IMR-90 (cell line): ENCODE measurements at regions of chr9 and their contacts with region 1.

Region 1: GRCh38 chr9:36407122-36407723 is 7.2 kb upstream of the RNF38 start:
- DNase-seq: peak; percentile 65
- ATAC-seq: peak; percentile 97
- H3K4me3 ChIP-seq: no peak overlapping the region
- H3K27ac ChIP-seq: no peak overlapping the region
- H3K4me1 ChIP-seq: no peaks in the 10 kb centered on the region; the same call in 1 of the 2 replicates
- H3K27me3 ChIP-seq: no peaks in the 10 kb centered on the region
- CTCF ChIP-seq: peak; percentile 94
- POLR2A ChIP-seq: no peak
- RAD21 ChIP-seq: peak; percentile 85

Region 2: DNA sequence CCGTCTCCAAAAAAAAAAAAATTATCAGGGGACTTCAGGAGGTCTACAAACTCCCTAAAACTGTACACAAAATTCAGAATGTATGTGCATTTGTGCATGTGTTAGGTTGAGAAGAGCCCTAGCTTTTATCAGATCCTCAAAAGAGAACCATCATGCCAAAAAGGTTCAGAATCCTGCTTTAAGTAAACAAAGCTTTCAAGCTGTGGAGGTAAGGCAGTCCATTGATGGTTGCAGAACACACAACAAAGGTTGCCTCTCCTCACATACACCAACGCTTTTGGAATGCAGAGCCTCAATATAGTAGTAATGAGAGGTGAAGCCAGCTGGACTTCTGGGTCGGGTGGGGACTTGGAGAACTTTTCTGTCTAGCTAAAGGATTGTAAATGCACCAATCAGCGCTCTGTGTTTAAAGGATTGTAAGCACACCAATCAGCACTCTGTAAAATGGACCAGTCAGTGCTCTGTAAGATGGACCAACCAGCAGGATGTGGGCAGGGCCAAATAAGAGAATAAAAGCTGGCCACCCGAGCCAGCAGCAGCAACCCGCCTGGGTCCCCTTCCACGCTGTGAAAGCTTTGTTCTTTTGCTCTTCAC is 50.7 kb after region 1 on chr9:
- CTCF ChIA-PET with region 1: interaction called, 19 read pairs
- POLR2A ChIA-PET with region 1: no interaction called
- dilution Hi-C with region 1: no loop called
- in situ Hi-C with region 1: no loop called
- intact Hi-C with region 1: no loop called
- DNase-seq: no peak
- ATAC-seq: no peak
- H3K4me3 ChIP-seq: no peak overlapping the region
- H3K27ac ChIP-seq: no peak overlapping the region
- H3K4me1 ChIP-seq: no peaks in the 10 kb centered on the region; the same call in 1 of the 2 replicates
- H3K27me3 ChIP-seq: no peaks in the 10 kb centered on the region
- CTCF ChIP-seq: no peak
- POLR2A ChIP-seq: no peak
- RAD21 ChIP-seq: no peak

Region 3: GRCh38 chr9:36521148-36521547 is 113.9 kb after region 1 on chr9:
- CTCF ChIA-PET with region 1: no interaction called
- POLR2A ChIA-PET with region 1: no interaction called
- dilution Hi-C with region 1: no loop called
- in situ Hi-C with region 1: no loop called
- intact Hi-C with region 1: no loop called
- DNase-seq: no peak
- ATAC-seq: no peak
- H3K4me3 ChIP-seq: no peak overlapping the region
- H3K27ac ChIP-seq: no peak overlapping the region
- H3K4me1 ChIP-seq: peaks cover 2% of the 10 kb centered on the region; the same call in 1 of the 2 replicates
- H3K27me3 ChIP-seq: peaks cover 2% of the 10 kb centered on the region; the same call in 1 of the 2 replicates
- CTCF ChIP-seq: no peak
- POLR2A ChIP-seq: no peak
- RAD21 ChIP-seq: no peak

Region 4: DNA sequence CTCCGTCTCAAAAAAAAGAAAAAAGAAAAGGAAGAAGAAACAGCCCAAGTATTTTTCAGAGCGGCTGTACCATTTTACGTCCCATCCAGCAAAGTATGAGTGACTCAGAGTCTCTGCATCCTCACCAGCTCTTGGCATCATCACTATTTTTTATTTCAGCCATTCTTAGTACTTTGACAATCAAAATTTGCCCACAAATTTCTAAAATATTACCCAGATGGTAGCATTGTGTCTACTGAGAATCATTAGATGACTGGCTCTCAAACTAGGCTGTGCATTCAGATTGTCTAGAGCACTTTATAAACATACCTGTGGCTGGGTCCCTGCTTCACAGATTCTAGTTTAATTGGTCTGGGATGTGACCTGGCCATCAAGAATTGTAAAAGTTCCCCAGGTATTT is 143.9 kb after region 1 on chr9:
- CTCF ChIA-PET with region 1: interaction called, 10 read pairs
- POLR2A ChIA-PET with region 1: no interaction called
- dilution Hi-C with region 1: no loop called
- in situ Hi-C with region 1: loop called (anchors 5 kb)
- intact Hi-C with region 1: loop called (anchors 1 kb)
- DNase-seq: no peak
- ATAC-seq: no peak
- H3K4me3 ChIP-seq: no peak overlapping the region
- H3K27ac ChIP-seq: no peak overlapping the region
- H3K4me1 ChIP-seq: no peaks in the 10 kb centered on the region
- H3K27me3 ChIP-seq: peaks cover 7% of the 10 kb centered on the region
- CTCF ChIP-seq: no peak
- POLR2A ChIP-seq: no peak
- RAD21 ChIP-seq: no peak

Region 5: DNA sequence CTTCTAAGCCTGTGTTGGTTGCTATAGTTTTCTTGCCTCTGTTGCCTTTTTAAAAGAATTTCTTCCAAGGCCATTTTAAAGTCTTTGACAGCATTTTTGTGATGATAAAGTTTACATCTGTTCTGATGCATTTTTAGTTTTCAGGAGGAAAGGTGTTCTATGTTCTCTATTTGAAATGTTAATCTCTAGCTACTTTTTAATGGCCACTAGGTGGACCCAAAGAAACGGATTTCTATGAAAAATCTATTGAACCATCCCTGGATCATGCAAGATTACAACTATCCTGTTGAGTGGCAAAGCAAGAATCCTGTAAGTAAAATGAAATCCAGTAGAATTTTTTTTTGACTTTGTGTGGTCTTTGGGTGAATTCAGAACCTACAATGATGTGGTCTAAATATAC is 225.7 kb after region 1 on chr9:
- CTCF ChIA-PET with region 1: no interaction called
- POLR2A ChIA-PET with region 1: no interaction called
- dilution Hi-C with region 1: no loop called
- in situ Hi-C with region 1: no loop called
- intact Hi-C with region 1: loop called (anchors 1 kb)
- DNase-seq: peak; percentile 51
- ATAC-seq: peak; percentile 53
- H3K4me3 ChIP-seq: no peak overlapping the region
- H3K27ac ChIP-seq: no peak overlapping the region
- H3K4me1 ChIP-seq: no peaks in the 10 kb centered on the region
- H3K27me3 ChIP-seq: no peaks in the 10 kb centered on the region
- CTCF ChIP-seq: peak; percentile 56
- POLR2A ChIP-seq: no peak
- RAD21 ChIP-seq: peak; percentile 53